ENCODE measurements at regions of chr11 and their contacts with region 1.

Region 1: DNA sequence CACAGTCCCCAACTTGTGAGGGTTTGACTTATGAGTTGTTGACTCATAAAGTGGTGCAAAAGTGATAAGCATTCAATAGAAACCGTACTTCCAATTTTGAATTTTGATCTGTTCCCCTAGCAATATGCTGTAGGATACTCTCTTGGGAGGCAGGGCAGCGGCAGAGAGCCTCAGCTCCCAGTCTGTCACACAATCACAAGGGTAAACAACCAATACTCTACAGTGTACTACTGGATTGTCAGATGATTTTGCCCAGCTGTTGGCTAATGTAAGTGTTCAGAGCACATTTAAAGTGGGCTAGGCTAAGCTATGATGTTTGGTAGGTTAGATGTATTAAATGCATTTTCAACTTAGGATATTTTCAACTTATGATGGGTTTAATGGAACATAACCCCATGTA is 13.7 kb upstream of the NXPE2 start:
- DNase-seq: no peak
- H3K4me3 ChIP-seq: no peak overlapping the region
- H3K27ac ChIP-seq: peak overlapping the region in 1 of 4 donors; percentile 18
- H3K4me1 ChIP-seq: peaks cover 0 to 40% (median 18%) of the 10 kb centered on the region in 4 donors
- H3K27me3 ChIP-seq: no peaks in the 10 kb centered on the region
- CTCF ChIP-seq: no peak
- EP300 ChIP-seq: no peak
- POLR2A ChIP-seq: no peak

Region 2: GRCh38 chr11:114563077-114563476 is 101.6 kb before region 1 on chr11:
- in situ Hi-C with region 1: loop called in 1 of 4 experiments (anchors 25 kb)
- intact Hi-C with region 1: no loop called
- DNase-seq: no peak
- H3K4me3 ChIP-seq: no peak overlapping the region
- H3K27ac ChIP-seq: peak overlapping the region in 2 of 4 donors; percentile 12 to 37
- H3K4me1 ChIP-seq: peaks cover 0 to 19% (median 8%) of the 10 kb centered on the region in 4 donors
- H3K27me3 ChIP-seq: no peaks in the 10 kb centered on the region
- CTCF ChIP-seq: no peak
- EP300 ChIP-seq: no peak
- POLR2A ChIP-seq: no peak